Sigmoid colon (tissue), 7 donors: ENCODE measurements at regions of chr13 and their contacts with region 1.

Region 1: DNA sequence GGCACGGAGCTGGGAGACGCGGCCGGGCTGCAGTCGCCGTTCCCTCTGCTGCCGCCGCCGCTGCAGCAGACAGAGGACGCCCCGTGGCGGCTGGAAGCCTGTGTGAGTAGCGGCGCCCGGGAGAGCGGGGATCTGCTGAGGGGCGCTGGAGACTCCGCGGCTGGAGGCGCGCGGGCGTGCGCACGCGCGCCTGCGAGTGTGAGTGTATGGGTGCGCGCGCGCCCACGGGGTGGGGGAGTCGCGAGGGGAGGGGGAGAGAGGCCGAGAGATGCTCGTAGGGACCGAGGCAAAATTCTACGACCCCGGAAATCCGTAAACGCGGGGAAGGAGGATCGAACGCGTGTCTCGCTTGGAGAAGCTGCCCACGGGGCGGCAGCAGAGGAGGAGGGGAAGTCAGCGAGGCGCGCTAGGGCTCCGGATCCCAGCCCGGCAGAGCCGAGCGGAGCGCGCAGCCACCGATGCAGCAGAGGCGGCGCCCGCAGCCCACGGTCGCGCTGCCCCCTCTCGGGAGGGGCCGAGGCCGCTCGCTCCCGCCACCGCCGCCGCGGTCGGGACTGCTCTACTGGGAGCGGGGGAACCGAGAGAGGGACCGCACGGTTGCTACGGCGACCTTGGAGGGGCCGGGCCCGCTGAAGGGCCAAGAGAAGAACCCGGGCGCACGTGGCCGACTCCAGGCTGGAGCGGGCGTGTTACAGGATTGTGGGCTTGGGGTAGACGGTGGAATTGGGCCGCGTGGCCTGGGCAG is at the start of gene ENOX1:
- DNase-seq: peak; percentile 90
- H3K4me3 ChIP-seq: peak within 1 kb of the TSS; percentile 79 to 89 (median 82)
- H3K27ac ChIP-seq: peak within 1 kb of the TSS; percentile 89 to 93 (median 92)
- H3K4me1 ChIP-seq: peaks cover 0 to 38% (median 22%) of the 10 kb centered on the region in 4 donors
- H3K27me3 ChIP-seq: no peaks in the 10 kb centered on the region
- CTCF ChIP-seq: peak in 1 of 4 experiments; percentile 32
- EP300 ChIP-seq: no peak
- POLR2A ChIP-seq: no peak
- total RNA-seq, gene ENOX1: 11.1 to 20.2 (median 15.0) TPM

Region 2: GRCh38 chr13:42345367-42345766 is 1441.6 kb before region 1 on chr13:
- intact Hi-C with region 1: no loop called
- DNase-seq: no peak
- H3K4me3 ChIP-seq: no peak overlapping the region
- H3K27ac ChIP-seq: no peak overlapping the region
- H3K4me1 ChIP-seq: no peaks in the 10 kb centered on the region
- H3K27me3 ChIP-seq: no peaks in the 10 kb centered on the region
- CTCF ChIP-seq: no peak
- EP300 ChIP-seq: no peak
- POLR2A ChIP-seq: no peak

Region 3: DNA sequence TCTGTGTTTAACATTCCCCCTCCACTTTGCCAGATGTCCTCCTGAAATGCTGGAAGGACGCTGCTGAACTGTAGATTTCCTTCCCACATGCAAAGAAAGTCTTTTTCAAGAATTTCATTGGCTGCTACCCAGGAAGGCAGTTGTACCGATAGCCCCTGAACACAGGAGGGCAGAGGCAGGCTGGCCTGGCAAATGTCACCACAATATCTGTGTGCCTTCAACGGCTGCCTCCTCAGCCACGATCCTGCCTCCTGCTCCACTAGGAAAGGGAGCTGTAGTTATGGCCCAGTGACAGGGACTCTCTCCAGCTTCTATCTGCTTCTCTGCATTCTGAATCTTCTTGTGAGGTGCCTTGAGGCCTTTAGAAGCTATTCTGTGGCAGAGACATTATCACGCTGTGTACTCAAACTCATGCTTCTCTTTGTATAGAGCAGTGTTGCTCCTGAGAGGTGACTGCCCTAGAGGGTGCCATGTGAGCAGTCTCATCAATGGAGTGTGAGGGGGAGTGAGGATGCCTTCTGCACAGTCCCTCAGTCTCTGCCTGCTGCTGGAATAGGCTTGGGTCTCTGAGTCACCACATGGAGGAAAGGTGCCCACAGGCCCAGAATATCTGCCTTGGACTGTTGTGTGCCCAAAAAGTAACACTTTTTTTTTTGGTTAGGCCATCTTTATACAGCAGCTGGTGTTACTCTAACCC is 483.8 kb before region 1 on chr13:
- intact Hi-C with region 1: loop called (anchors 2 kb)
- DNase-seq: peak; percentile 80
- H3K4me3 ChIP-seq: no peak overlapping the region
- H3K27ac ChIP-seq: peak overlapping the region; percentile 33 to 75 (median 71)
- H3K4me1 ChIP-seq: peaks cover 0 to 99% (median 76%) of the 10 kb centered on the region in 4 donors
- H3K27me3 ChIP-seq: no peaks in the 10 kb centered on the region
- CTCF ChIP-seq: peak; percentile 33 to 50 (median 42)
- EP300 ChIP-seq: no peak
- POLR2A ChIP-seq: no peak

Region 4: DNA sequence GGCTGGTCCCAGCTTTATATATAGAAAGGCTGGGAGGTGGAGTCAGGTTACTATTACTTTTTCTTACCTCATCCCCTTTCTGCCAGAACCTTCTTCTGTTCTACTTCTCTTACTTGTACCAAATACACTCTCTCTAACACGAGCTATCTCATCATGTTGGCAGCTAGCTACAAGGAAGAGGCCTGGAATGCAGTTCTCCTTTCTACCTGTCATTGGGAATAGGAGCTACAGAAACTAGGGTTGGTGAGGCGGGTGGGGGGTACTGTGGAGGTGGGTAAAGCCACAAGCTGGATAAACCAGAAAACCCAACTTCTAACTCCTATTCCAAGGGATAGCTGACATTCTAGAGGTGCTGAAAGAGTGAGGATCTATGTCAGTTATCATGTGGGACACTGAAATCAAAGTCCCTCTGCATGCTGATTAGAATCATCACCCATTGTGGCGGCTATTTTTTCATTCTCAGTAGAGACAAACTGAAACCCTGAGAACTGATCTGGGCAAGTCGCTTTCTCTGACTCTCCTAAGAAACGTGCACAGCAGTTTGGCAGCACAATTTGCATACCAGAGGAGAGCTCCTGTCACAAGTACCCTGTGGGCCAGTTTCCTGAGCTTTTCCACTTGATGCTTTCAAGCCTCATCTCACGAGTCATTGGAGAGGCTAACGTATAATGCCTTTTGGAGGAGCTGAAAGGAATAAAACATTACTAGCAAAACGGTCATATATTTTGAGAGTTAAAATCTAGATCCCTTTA is 358.2 kb before region 1 on chr13:
- intact Hi-C with region 1: loop called (anchors 5 kb)
- DNase-seq: no peak
- H3K4me3 ChIP-seq: no peak overlapping the region
- H3K27ac ChIP-seq: peak overlapping the region in 2 of 4 donors; percentile 35 to 42
- H3K4me1 ChIP-seq: peaks cover 0 to 69% (median 38%) of the 10 kb centered on the region in 4 donors
- H3K27me3 ChIP-seq: no peaks in the 10 kb centered on the region
- CTCF ChIP-seq: no peak
- EP300 ChIP-seq: no peak
- POLR2A ChIP-seq: no peak

Region 5: DNA sequence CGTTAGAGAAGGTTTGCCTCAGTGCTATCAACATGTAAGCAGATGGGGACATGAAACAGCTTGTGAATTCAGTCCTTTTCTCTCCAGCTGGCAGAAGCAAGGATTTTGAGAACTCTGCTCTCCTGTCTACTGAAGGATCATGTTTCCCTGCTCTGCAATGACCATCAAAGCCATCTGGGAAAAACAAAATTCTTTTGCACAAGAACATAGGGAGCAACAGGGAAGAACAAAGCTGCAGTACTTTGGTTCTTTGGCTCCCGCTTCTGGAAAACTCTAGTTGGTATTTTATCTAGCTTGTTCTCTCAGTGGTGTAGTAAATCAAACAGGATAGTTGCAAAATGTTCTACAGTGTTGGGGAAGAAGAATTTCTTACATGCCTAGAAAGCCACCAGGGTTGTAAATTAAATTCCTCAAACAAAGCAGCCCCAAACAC is 270.5 kb before region 1 on chr13:
- intact Hi-C with region 1: loop called (anchors 5 kb)
- DNase-seq: peak; percentile 77
- H3K4me3 ChIP-seq: no peak overlapping the region
- H3K27ac ChIP-seq: peak overlapping the region; percentile 68 to 86 (median 77)
- H3K4me1 ChIP-seq: peaks cover 0 to 58% (median 46%) of the 10 kb centered on the region in 4 donors
- H3K27me3 ChIP-seq: no peaks in the 10 kb centered on the region
- CTCF ChIP-seq: no peak
- EP300 ChIP-seq: peak; percentile 13 to 84 (median 44)
- POLR2A ChIP-seq: no peak

Region 6: GRCh38 chr13:43664700-43665191 is 122.2 kb before region 1 on chr13:
- intact Hi-C with region 1: loop called (anchors 5 kb)
- DNase-seq: peak; percentile 66
- H3K4me3 ChIP-seq: no peak overlapping the region
- H3K27ac ChIP-seq: peak overlapping the region; percentile 52 to 74 (median 67)
- H3K4me1 ChIP-seq: peaks cover 0 to 36% (median 30%) of the 10 kb centered on the region in 4 donors
- H3K27me3 ChIP-seq: no peaks in the 10 kb centered on the region
- CTCF ChIP-seq: no peak
- EP300 ChIP-seq: no peak
- POLR2A ChIP-seq: no peak

Region 7: DNA sequence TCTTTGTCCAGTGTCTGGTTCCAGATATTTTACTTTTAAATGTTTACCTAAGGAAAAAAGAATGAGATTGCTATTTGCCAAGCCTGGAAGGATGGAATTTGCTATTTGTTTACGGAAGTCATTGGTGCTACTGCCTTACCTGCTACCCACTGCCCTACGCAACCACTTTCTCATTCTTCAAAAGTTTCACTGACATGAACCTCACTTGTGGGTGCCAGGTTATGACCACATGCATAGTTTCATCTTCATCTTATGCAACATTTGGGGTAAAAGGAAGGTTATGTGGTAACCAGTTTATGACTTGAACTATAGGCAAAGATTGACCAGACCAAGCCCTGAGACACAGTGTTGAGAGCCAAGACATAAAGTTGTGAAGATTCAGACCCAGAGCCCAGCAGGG is 235.2 kb after region 1 on chr13:
- intact Hi-C with region 1: no loop called
- DNase-seq: no peak
- H3K4me3 ChIP-seq: no peak overlapping the region
- H3K27ac ChIP-seq: no peak overlapping the region
- H3K4me1 ChIP-seq: no peaks in the 10 kb centered on the region
- H3K27me3 ChIP-seq: no peaks in the 10 kb centered on the region
- CTCF ChIP-seq: no peak
- EP300 ChIP-seq: no peak
- POLR2A ChIP-seq: no peak